CD4-positive, alpha-beta T cell (primary cell): ENCODE measurements at regions of chr5 and their contacts with region 1.

Region 1: GRCh38 chr5:100903039-100903887 is at the start of gene ST8SIA4:
- DNase-seq: peak; percentile 80 to 96 (median 88)
- ATAC-seq: peak; percentile 73
- H3K4me3 ChIP-seq: peak within 1 kb of the TSS; percentile 92
- H3K4me3 Mint-ChIP-seq: peak within 1 kb of the TSS; percentile 92
- H3K27ac ChIP-seq: peak within 1 kb of the TSS; percentile 83 to 96
- H3K27ac Mint-ChIP-seq: peak within 1 kb of the TSS; percentile 93
- H3K4me1 ChIP-seq: peaks cover 28% of the 10 kb centered on the region
- H3K4me1 Mint-ChIP-seq: peaks cover 53% of the 10 kb centered on the region
- H3K27me3 ChIP-seq: no peaks in the 10 kb centered on the region
- H3K27me3 Mint-ChIP-seq: no peaks in the 10 kb centered on the region
- CTCF ChIP-seq: no peak
- total RNA-seq, gene ST8SIA4: 17.8 to 19.5 TPM

Region 2: DNA sequence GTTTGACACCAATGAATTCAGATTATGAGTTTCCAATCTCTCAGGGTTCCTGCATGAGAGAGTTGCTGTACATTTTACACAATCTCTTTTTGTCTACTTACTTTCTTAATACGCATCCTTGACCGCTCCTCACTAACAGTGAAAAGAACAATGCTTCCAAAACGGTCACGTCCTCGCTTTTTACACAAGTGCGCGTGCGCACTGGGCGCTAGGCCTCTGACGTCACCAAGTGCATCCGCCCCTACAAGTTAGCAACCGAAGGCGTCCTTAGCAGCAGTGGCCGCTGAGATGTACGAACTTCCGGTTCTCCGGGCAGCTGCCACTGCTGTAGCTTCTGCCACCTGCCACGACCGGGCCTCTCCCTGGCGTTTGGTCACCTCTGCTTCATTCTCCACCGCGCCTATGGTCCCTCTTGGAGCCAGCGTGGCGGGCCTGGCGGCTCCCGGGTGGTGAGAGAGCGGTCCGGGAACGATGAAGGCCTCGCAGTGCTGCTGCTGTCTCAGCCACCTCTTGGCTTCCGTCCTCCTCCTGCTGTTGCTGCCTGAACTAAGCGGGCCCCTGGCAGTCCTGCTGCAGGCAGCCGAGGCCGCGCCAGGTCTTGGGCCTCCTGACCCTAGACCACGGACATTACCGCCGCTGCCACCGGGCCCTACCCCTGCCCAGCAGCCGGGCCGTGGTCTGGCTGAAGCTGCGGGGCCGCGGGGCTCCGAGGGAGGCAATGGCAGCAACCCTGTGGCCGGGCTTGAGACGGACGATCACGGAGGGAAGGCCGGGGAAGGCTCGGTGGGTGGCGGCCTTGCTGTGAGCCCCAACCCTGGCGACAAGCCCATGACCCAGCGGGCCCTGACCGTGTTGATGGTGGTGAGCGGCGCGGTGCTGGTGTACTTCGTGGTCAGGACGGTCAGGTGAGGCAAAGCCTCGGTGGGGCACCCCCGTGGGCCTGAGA is 367.9 kb before region 1 on chr5 and contains the start of gene FAM174A:
- CTCF ChIA-PET with region 1: no interaction called
- POLR2A ChIA-PET with region 1: interaction called, 13 read pairs
- intact Hi-C with region 1: loop called (anchors 5 kb)
- DNase-seq: peak; percentile 90 to 98 (median 92)
- ATAC-seq: peak; percentile 86
- H3K4me3 ChIP-seq: peak within 1 kb of the TSS; percentile 83
- H3K4me3 Mint-ChIP-seq: peak within 1 kb of the TSS; percentile 92
- H3K27ac ChIP-seq: peak within 1 kb of the TSS; percentile 62 to 89
- H3K27ac Mint-ChIP-seq: peak within 1 kb of the TSS; percentile 89
- H3K4me1 ChIP-seq: peaks cover 13% of the 10 kb centered on the region
- H3K4me1 Mint-ChIP-seq: peaks cover 35% of the 10 kb centered on the region
- H3K27me3 ChIP-seq: no peaks in the 10 kb centered on the region
- H3K27me3 Mint-ChIP-seq: no peaks in the 10 kb centered on the region
- CTCF ChIP-seq: no peak
- total RNA-seq, gene FAM174A: 5.4 to 6.2 TPM

Region 3: GRCh38 chr5:100731768-100732167 is 171.5 kb before region 1 on chr5:
- CTCF ChIA-PET with region 1: no interaction called
- POLR2A ChIA-PET with region 1: no interaction called
- intact Hi-C with region 1: loop called in 1 of 2 experiments (anchors 5 kb)
- DNase-seq: peak in 5 of 14 experiments; percentile 1 to 83 (median 58)
- ATAC-seq: peak; percentile 95
- H3K4me3 ChIP-seq: peak overlapping the region; percentile 32
- H3K4me3 Mint-ChIP-seq: peak overlapping the region; percentile 75
- H3K27ac ChIP-seq: peak overlapping the region in 1 of 2 donors; percentile 46
- H3K27ac Mint-ChIP-seq: peak overlapping the region; percentile 75
- H3K4me1 ChIP-seq: no peaks in the 10 kb centered on the region
- H3K4me1 Mint-ChIP-seq: peaks cover 10% of the 10 kb centered on the region
- H3K27me3 ChIP-seq: no peaks in the 10 kb centered on the region
- H3K27me3 Mint-ChIP-seq: no peaks in the 10 kb centered on the region
- CTCF ChIP-seq: no peak

Region 4: GRCh38 chr5:100840384-100840783 is 62.9 kb before region 1 on chr5:
- CTCF ChIA-PET with region 1: interaction called, 4 read pairs
- POLR2A ChIA-PET with region 1: interaction called, 20 read pairs
- intact Hi-C with region 1: loop called (anchors 2 to 5 kb)
- DNase-seq: peak in 4 of 14 experiments; percentile 0 to 74 (median 54)
- ATAC-seq: peak; percentile 66
- H3K4me3 ChIP-seq: no peak overlapping the region
- H3K4me3 Mint-ChIP-seq: no peak overlapping the region
- H3K27ac ChIP-seq: no peak overlapping the region
- H3K27ac Mint-ChIP-seq: peak overlapping the region; percentile 55
- H3K4me1 ChIP-seq: no peaks in the 10 kb centered on the region
- H3K4me1 Mint-ChIP-seq: peaks cover 72% of the 10 kb centered on the region
- H3K27me3 ChIP-seq: no peaks in the 10 kb centered on the region
- H3K27me3 Mint-ChIP-seq: no peaks in the 10 kb centered on the region
- CTCF ChIP-seq: no peak

Region 5: GRCh38 chr5:100877274-100877673 is 26.0 kb before region 1 on chr5:
- CTCF ChIA-PET with region 1: no interaction called
- POLR2A ChIA-PET with region 1: interaction called, 10 read pairs
- intact Hi-C with region 1: no loop called
- DNase-seq: peak in 1 of 14 experiments; percentile 27
- ATAC-seq: no peak
- H3K4me3 ChIP-seq: no peak overlapping the region
- H3K4me3 Mint-ChIP-seq: no peak overlapping the region
- H3K27ac ChIP-seq: no peak overlapping the region
- H3K27ac Mint-ChIP-seq: no peak overlapping the region
- H3K4me1 ChIP-seq: no peaks in the 10 kb centered on the region
- H3K4me1 Mint-ChIP-seq: peaks cover 49% of the 10 kb centered on the region
- H3K27me3 ChIP-seq: no peaks in the 10 kb centered on the region
- H3K27me3 Mint-ChIP-seq: no peaks in the 10 kb centered on the region
- CTCF ChIP-seq: no peak

Region 6: GRCh38 chr5:100939981-100940380 is 36.7 kb after region 1 on chr5:
- CTCF ChIA-PET with region 1: no interaction called
- POLR2A ChIA-PET with region 1: no interaction called
- intact Hi-C with region 1: no loop called
- DNase-seq: no peak
- ATAC-seq: no peak
- H3K4me3 ChIP-seq: no peak overlapping the region
- H3K4me3 Mint-ChIP-seq: no peak overlapping the region
- H3K27ac ChIP-seq: no peak overlapping the region
- H3K27ac Mint-ChIP-seq: no peak overlapping the region
- H3K4me1 ChIP-seq: no peaks in the 10 kb centered on the region
- H3K4me1 Mint-ChIP-seq: no peaks in the 10 kb centered on the region
- H3K27me3 ChIP-seq: no peaks in the 10 kb centered on the region
- H3K27me3 Mint-ChIP-seq: no peaks in the 10 kb centered on the region
- CTCF ChIP-seq: no peak

Region 7: DNA sequence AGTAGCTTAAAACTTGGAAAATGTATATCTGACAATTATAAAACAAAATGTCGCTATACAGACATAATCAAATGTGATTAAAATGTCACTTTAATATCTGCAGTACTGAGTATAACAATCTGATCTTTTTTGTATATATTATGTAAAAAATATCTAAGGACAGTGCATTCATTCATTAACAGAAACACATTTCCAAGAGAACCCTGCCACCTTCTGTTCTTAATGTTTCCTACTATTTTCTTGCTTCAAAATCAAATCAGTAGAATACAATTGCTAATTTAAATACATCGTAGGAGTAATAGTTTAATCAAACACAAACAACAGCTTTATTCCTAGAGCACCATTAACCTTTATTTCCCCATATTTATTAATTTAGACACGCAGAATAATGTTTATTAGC is 142.4 kb after region 1 on chr5:
- CTCF ChIA-PET with region 1: no interaction called
- POLR2A ChIA-PET with region 1: no interaction called
- intact Hi-C with region 1: loop called in 1 of 2 experiments (anchors 5 kb)
- DNase-seq: peak in 3 of 14 experiments; percentile 41 to 42 (median 41)
- ATAC-seq: no peak
- H3K4me3 ChIP-seq: no peak overlapping the region
- H3K4me3 Mint-ChIP-seq: no peak overlapping the region
- H3K27ac ChIP-seq: no peak overlapping the region
- H3K27ac Mint-ChIP-seq: no peak overlapping the region
- H3K4me1 ChIP-seq: no peaks in the 10 kb centered on the region
- H3K4me1 Mint-ChIP-seq: peaks cover 9% of the 10 kb centered on the region
- H3K27me3 ChIP-seq: no peaks in the 10 kb centered on the region
- H3K27me3 Mint-ChIP-seq: no peaks in the 10 kb centered on the region
- CTCF ChIP-seq: peak; percentile 52